Ascending aorta (tissue), 2 donors: ENCODE measurements at regions of chr3 and their contacts with region 1.

Region 1: GRCh38 chr3:12719984-12720898 is 38.8 kb downstream of the TMEM40 start:
- DNase-seq: peak; percentile 33 to 90
- H3K4me3 ChIP-seq: peak overlapping the region; percentile 40 to 55
- H3K27ac ChIP-seq: peak overlapping the region in 1 of 2 donors; percentile 8
- H3K4me1 ChIP-seq: peaks cover 0 to 4% of the 10 kb centered on the region in 2 donors
- H3K27me3 ChIP-seq: no peaks in the 10 kb centered on the region
- CTCF ChIP-seq: peak; percentile 89 to 96 (median 90)

Region 2: GRCh38 chr3:12135029-12135657 is 585.1 kb before region 1 on chr3:
- intact Hi-C with region 1: loop called (anchors 10 kb)
- DNase-seq: peak in 1 of 2 donors; percentile 84
- H3K4me3 ChIP-seq: no peak overlapping the region
- H3K27ac ChIP-seq: no peak overlapping the region
- H3K4me1 ChIP-seq: no peaks in the 10 kb centered on the region
- H3K27me3 ChIP-seq: no peaks in the 10 kb centered on the region
- CTCF ChIP-seq: peak; percentile 85 to 88 (median 87)

Region 3: GRCh38 chr3:12556671-12557472 is 163.4 kb before region 1 on chr3 and contains the start of gene MKRN2:
- intact Hi-C with region 1: loop called (anchors 5 kb)
- DNase-seq: peak; percentile 33 to 92
- H3K4me3 ChIP-seq: peak within 1 kb of the TSS; percentile 61 to 99
- H3K27ac ChIP-seq: peak within 1 kb of the TSS; percentile 92 to 98
- H3K4me1 ChIP-seq: peaks cover 6 to 32% of the 10 kb centered on the region in 2 donors
- H3K27me3 ChIP-seq: no peaks in the 10 kb centered on the region
- CTCF ChIP-seq: no peak
- total RNA-seq, gene MKRN2: 25.2 TPM

Region 4: DNA sequence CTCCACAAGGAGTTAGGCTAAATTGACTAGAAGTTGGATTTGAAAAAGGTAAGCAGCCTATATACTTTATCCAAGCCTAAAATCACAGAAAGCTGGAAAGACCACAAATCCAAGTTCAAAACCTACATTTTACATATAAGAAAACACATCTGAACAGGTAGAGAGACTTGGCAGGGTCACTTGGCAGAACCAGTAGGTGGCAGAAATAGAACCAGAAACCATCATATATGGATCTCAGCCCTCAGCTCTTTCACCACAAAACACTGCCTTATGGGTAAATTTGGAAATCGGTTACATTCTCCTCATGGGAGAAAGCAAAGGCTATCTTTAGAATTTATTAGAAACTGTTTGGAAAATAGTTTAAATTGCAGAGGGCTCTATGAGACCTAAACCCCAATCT is 119.2 kb before region 1 on chr3:
- intact Hi-C with region 1: loop called (anchors 5 kb)
- DNase-seq: no peak
- H3K4me3 ChIP-seq: no peak overlapping the region
- H3K27ac ChIP-seq: peak overlapping the region; percentile 28 to 42
- H3K4me1 ChIP-seq: peaks cover 0 to 11% of the 10 kb centered on the region in 2 donors
- H3K27me3 ChIP-seq: no peaks in the 10 kb centered on the region
- CTCF ChIP-seq: peak in 1 of 3 experiments; percentile 29

Region 5: GRCh38 chr3:12822725-12823373 is 102.6 kb after region 1 on chr3:
- intact Hi-C with region 1: no loop called
- DNase-seq: no peak
- H3K4me3 ChIP-seq: no peak overlapping the region
- H3K27ac ChIP-seq: no peak overlapping the region
- H3K4me1 ChIP-seq: no peaks in the 10 kb centered on the region
- H3K27me3 ChIP-seq: no peaks in the 10 kb centered on the region
- CTCF ChIP-seq: peak in 2 of 3 experiments; percentile 8 to 24